Activated CD8-positive, alpha-beta T cell treated with anti-CD3 and anti-CD28 coated beads, Interleukin-2, amount 10 ng/mL, durations not matched to agents 7 days and 5 days (primary cell): ENCODE measurements at regions of chr5 and their contacts with region 1.

Region 1: GRCh38 chr5:98768160-98769005 is 5.1 kb upstream of the RGMB start:
- DNase-seq: peak; percentile 40
- ATAC-seq: peak; percentile 37
- H3K4me3 Mint-ChIP-seq: peak overlapping the region; percentile 84
- H3K27ac Mint-ChIP-seq: no peak overlapping the region
- H3K4me1 Mint-ChIP-seq: peaks cover 40% of the 10 kb centered on the region
- H3K27me3 Mint-ChIP-seq: peaks cover 65% of the 10 kb centered on the region

Region 2: GRCh38 chr5:98556712-98557111 is 211.7 kb before region 1 on chr5:
- CTCF ChIA-PET with region 1: no interaction called
- POLR2A ChIA-PET with region 1: no interaction called
- DNase-seq: no peak
- ATAC-seq: no peak
- H3K4me3 Mint-ChIP-seq: no peak overlapping the region
- H3K27ac Mint-ChIP-seq: no peak overlapping the region
- H3K4me1 Mint-ChIP-seq: no peaks in the 10 kb centered on the region
- H3K27me3 Mint-ChIP-seq: no peaks in the 10 kb centered on the region

Region 3: GRCh38 chr5:98705841-98706240 is 62.5 kb before region 1 on chr5:
- CTCF ChIA-PET with region 1: no interaction called
- POLR2A ChIA-PET with region 1: no interaction called
- DNase-seq: no peak
- ATAC-seq: no peak
- H3K4me3 Mint-ChIP-seq: no peak overlapping the region
- H3K27ac Mint-ChIP-seq: no peak overlapping the region
- H3K4me1 Mint-ChIP-seq: no peaks in the 10 kb centered on the region
- H3K27me3 Mint-ChIP-seq: no peaks in the 10 kb centered on the region

Region 4: GRCh38 chr5:98750693-98751092 is 17.7 kb before region 1 on chr5:
- CTCF ChIA-PET with region 1: interaction called, 52 read pairs
- POLR2A ChIA-PET with region 1: no interaction called
- DNase-seq: no peak
- ATAC-seq: no peak
- H3K4me3 Mint-ChIP-seq: no peak overlapping the region
- H3K27ac Mint-ChIP-seq: no peak overlapping the region
- H3K4me1 Mint-ChIP-seq: no peaks in the 10 kb centered on the region
- H3K27me3 Mint-ChIP-seq: peaks cover 13% of the 10 kb centered on the region

Region 5: DNA sequence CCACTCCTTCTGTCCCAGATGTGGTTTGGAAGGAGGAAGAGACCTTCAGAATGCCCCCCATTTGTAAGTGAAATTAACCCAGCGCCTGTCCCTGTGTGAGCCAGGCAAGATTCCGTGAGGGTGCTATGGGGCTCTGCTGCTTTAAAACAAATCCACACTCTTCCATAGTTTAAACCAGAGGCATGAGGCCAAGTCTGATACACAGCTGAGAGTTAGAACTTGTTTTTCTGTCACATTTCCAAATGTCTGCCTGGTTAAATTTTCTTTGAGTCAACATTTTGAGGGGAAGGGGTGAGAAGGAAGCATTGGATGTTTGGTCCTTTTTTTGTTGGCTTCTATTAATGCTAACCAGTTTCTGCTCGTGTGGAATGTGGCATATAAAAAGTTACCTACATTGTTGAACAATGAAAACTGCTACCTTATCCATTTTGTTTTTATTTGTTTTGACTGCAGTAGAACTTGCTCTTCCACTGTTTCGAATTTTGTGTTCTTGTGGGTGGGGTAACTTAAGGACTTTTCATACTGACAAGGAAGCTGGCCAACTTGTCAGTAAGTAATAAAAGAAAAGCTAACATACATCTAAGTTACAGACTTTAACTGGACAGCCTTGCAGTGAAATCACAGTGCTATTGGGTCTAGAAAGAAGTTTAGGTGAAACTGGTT is 17.9 kb after region 1 on chr5:
- CTCF ChIA-PET with region 1: interaction called, 71 read pairs
- POLR2A ChIA-PET with region 1: no interaction called
- DNase-seq: no peak
- ATAC-seq: no peak
- H3K4me3 Mint-ChIP-seq: no peak overlapping the region
- H3K27ac Mint-ChIP-seq: no peak overlapping the region
- H3K4me1 Mint-ChIP-seq: no peaks in the 10 kb centered on the region
- H3K27me3 Mint-ChIP-seq: peaks cover 2% of the 10 kb centered on the region